ENCODE measurements at regions of chr14 and their contacts with region 1.

Region 1: DNA sequence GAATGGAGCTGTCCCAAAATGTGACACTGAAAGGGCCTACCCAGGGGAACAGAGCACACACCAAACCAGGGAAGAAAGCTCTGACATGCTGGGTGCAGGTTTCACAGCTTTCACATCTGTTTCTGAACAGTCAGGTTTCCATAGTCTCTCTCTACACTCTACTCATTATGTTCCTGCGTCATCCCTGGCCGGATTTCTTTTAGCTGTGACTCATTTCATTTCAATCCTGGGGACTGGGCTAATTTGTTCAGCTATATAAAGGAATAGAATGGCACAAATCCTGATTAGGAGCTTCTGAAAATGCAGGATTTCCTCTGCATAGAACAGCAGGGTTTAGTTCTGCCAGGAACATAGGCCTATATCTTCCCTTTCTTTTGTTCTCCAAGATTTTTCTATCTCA is 649.8 kb downstream of the RPS29 start:
- DNase-seq: no peak
- H3K4me3 Mint-ChIP-seq: no peak overlapping the region
- H3K27ac Mint-ChIP-seq: no peak overlapping the region
- H3K4me1 Mint-ChIP-seq: no peaks in the 10 kb centered on the region
- H3K27me3 Mint-ChIP-seq: no peaks in the 10 kb centered on the region

Region 2: DNA sequence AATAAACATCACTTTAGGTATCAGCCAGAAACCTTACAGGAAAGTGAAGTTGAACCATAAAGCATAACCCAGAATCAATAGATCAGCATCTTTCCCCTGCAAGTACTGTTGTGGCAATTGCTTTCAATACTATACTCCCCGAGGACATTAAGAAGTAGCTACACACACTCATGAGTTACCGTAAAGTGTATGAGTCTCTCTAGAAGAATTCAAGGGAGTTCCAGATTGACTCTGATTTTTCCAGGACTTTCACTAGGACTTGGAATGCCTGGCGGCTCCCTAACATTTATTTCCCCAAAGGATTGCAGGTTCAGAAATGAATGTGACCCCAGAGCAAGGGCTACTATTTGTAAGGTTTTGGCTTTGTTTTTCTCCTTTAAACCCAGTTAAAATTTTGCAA is 795.6 kb before region 1 on chr14:
- intact Hi-C with region 1: loop called (anchors 5 kb)
- DNase-seq: no peak
- H3K4me3 Mint-ChIP-seq: no peak overlapping the region
- H3K27ac Mint-ChIP-seq: no peak overlapping the region
- H3K4me1 Mint-ChIP-seq: no peaks in the 10 kb centered on the region
- H3K27me3 Mint-ChIP-seq: no peaks in the 10 kb centered on the region

Measured in activated CD4-positive, alpha-beta T cell treated with anti-CD3 and anti-CD28 coated beads, Interleukin-2, amount 10 ng/mL, durations not matched to agents 24 days and 14 days (primary cell).